ENCODE measurements at regions of chr12 and their contacts with region 1.

Region 1: DNA sequence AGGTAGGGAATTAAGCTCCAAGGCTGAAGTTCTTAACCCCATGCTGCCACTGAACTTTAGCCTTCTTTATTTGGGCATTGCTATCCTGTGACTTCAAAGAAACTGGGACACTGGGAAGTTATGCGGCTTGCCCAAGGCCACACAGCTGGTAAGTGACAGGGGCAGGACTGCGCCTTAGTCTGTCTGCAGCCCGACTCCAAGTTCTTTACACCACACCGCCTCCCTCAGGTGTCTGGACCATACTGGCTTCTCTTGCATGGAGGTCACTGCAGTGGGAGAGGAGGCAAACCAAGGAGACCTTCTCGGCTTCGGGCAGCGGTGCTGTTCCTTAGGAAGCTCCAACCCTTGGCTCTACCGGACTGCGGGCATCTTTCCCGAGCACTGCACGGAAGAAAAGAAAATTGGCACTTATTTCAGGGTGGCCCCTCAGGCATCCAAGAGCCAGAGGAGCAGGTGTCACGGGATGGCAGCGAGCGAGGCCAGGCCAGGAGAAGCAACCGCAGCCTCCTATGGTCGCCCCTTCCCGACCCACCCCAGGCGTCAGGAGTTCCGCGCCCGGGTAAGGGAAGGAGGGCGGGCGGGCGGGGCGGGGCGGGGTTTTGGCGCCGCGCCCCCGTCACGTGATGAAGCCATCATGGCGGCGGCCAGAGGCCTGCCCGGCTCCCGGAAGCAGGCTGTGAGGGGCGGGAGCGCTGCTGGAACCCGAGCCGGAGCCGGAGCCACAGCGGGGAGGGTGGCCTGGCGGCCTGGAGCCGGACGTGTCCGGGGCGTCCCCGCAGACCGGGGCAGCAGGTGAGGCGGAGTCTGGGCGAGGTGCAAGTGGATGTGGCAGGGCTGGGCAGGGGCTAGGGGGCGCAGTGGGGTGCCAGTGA is 16.4 kb upstream of the ESPL1 start:
- DNase-seq: peak; percentile 92

Region 2: DNA sequence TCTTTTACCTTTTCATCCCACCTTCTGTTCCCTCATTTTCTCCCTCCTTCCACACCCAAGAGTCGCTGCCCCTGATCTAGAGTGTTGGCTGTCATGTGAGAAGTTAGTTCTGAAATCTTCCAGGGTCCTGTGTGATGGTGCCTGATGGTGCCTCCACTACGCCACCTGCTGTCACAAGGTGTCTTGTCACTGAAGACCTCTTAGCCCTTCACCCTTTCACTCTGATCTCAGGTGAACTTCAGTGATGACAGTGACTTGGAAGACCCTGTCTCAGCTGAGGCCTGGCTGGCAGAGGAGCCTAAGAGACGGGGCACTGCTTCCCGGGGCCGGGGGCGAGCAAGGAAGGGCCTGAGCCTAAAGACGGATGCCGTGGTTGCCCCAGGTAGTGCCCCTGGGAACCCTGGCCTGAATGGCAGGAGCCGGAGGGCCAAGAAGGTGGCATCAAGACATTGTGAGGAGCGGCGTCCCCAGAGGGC is 36.1 kb after region 1 on chr12:
- intact Hi-C with region 1: loop called in 1 of 2 experiments (anchors 5 kb)
- DNase-seq: peak; percentile 89